ENCODE measurements at regions of chr1 and their contacts with region 1.

Region 1: DNA sequence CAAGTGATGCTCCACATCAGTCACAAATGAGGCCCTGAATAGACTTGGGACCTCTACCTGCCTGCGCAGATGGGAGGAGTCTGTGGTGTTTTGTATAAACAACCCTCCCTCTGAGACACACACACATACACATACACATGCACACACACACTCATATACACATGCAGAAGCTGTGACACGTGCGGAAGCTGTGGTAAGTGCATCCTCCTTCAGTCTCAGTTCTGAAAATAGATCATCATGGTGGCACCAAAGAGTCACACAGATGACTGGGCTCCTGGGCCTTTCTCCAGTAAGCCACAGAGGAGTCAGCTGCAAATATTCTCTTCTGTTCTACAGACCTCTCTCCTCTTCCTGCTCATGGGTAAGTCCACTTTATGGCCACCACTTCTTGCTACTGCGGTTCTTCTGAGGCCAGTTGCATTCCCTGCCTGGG is at the start of gene LY9:
- DNase-seq: peak; percentile 66 to 96
- ATAC-seq: peak; percentile 84 to 93 (median 92)
- H3K4me3 ChIP-seq: peak within 1 kb of the TSS; percentile 39
- H3K4me3 Mint-ChIP-seq: peak within 1 kb of the TSS; percentile 90
- H3K27ac ChIP-seq: peak within 1 kb of the TSS; percentile 94
- H3K27ac Mint-ChIP-seq: peak within 1 kb of the TSS; percentile 91 to 95
- H3K4me1 ChIP-seq: peaks cover 49% of the 10 kb centered on the region
- H3K4me1 Mint-ChIP-seq: peaks cover 59 to 70% of the 10 kb centered on the region in 2 donors
- H3K27me3 ChIP-seq: no peaks in the 10 kb centered on the region
- H3K27me3 Mint-ChIP-seq: no peaks in the 10 kb centered on the region
- CTCF ChIP-seq: no peak
- total RNA-seq, gene LY9: 30.3 to 47.1 (median 34.4) TPM

Region 2: DNA sequence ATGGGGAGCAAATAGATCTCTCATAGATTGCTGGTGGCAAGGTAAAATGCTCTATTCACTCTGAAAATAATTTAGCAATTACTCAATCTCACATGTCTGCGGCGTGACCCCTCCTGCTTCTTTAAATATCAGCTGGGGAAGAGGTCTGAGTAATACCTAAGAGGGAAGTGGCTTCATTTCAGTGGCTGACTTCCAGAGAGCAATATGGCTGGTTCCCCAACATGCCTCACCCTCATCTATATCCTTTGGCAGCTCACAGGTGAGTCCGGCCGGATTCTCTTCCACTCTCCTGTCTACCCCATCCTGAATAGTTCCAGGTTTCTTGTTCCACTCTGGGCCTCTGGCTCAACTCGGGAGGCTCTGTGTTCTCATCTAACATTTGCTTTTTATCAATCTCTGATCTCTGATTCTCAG is 56.9 kb before region 1 on chr1 and contains the start of gene SLAMF7:
- intact Hi-C with region 1: loop called (anchors 2 kb)
- DNase-seq: peak; percentile 63 to 75
- ATAC-seq: peak; percentile 71 to 84 (median 76)
- H3K4me3 ChIP-seq: peak within 1 kb of the TSS; percentile 43
- H3K4me3 Mint-ChIP-seq: peak within 1 kb of the TSS; percentile 88
- H3K27ac ChIP-seq: peak within 1 kb of the TSS; percentile 87
- H3K27ac Mint-ChIP-seq: peak within 1 kb of the TSS; percentile 88 to 96
- H3K4me1 ChIP-seq: peaks cover 43% of the 10 kb centered on the region
- H3K4me1 Mint-ChIP-seq: peaks cover 74 to 91% of the 10 kb centered on the region in 2 donors
- H3K27me3 ChIP-seq: no peaks in the 10 kb centered on the region
- H3K27me3 Mint-ChIP-seq: no peaks in the 10 kb centered on the region
- CTCF ChIP-seq: no peak
- total RNA-seq, gene SLAMF7: 191 to 301 (median 227) TPM

Region 3: GRCh38 chr1:160862203-160863060 is 66.5 kb after region 1 on chr1 and contains the start of gene CD244:
- intact Hi-C with region 1: loop called (anchors 5 kb)
- DNase-seq: peak; percentile 79 to 81
- ATAC-seq: peak; percentile 88 to 97 (median 95)
- H3K4me3 ChIP-seq: peak within 1 kb of the TSS; percentile 66
- H3K4me3 Mint-ChIP-seq: peak within 1 kb of the TSS; percentile 97
- H3K27ac ChIP-seq: peak within 1 kb of the TSS; percentile 74
- H3K27ac Mint-ChIP-seq: peak within 1 kb of the TSS in 1 of 2 donors; percentile 93
- H3K4me1 ChIP-seq: peaks cover 65% of the 10 kb centered on the region
- H3K4me1 Mint-ChIP-seq: peaks cover 54 to 64% of the 10 kb centered on the region in 2 donors
- H3K27me3 ChIP-seq: no peaks in the 10 kb centered on the region
- H3K27me3 Mint-ChIP-seq: no peaks in the 10 kb centered on the region
- CTCF ChIP-seq: no peak
- total RNA-seq, gene CD244: 131 to 193 (median 150) TPM

Region 4: GRCh38 chr1:160942926-160943325 is 147.0 kb after region 1 on chr1:
- intact Hi-C with region 1: no loop called
- DNase-seq: no peak
- ATAC-seq: no peak
- H3K4me3 ChIP-seq: no peak overlapping the region
- H3K4me3 Mint-ChIP-seq: no peak overlapping the region
- H3K27ac ChIP-seq: no peak overlapping the region
- H3K27ac Mint-ChIP-seq: no peak overlapping the region
- H3K4me1 ChIP-seq: peaks cover 2% of the 10 kb centered on the region
- H3K4me1 Mint-ChIP-seq: peaks cover 4% of the 10 kb centered on the region in 2 donors
- H3K27me3 ChIP-seq: no peaks in the 10 kb centered on the region
- H3K27me3 Mint-ChIP-seq: peaks cover 17 to 28% of the 10 kb centered on the region in 2 donors
- CTCF ChIP-seq: no peak

Region 5: GRCh38 chr1:161177112-161177935 is 381.4 kb after region 1 on chr1 and contains the start of gene B4GALT3:
- intact Hi-C with region 1: no loop called
- DNase-seq: peak; percentile 91 to 97
- ATAC-seq: peak; percentile 89 to 94 (median 94)
- H3K4me3 ChIP-seq: peak within 1 kb of the TSS; percentile 96
- H3K4me3 Mint-ChIP-seq: peak within 1 kb of the TSS; percentile 99
- H3K27ac ChIP-seq: peak within 1 kb of the TSS; percentile 89
- H3K27ac Mint-ChIP-seq: peak within 1 kb of the TSS; percentile 96 to 99
- H3K4me1 ChIP-seq: peaks cover 36% of the 10 kb centered on the region
- H3K4me1 Mint-ChIP-seq: peaks cover 74 to 81% of the 10 kb centered on the region in 2 donors
- H3K27me3 ChIP-seq: no peaks in the 10 kb centered on the region
- H3K27me3 Mint-ChIP-seq: no peaks in the 10 kb centered on the region
- CTCF ChIP-seq: no peak
- total RNA-seq, gene B4GALT3: 58.4 to 62.2 (median 59.4) TPM